ENCODE measurements at regions of chr20 and their contacts with region 1.

Region 1: DNA sequence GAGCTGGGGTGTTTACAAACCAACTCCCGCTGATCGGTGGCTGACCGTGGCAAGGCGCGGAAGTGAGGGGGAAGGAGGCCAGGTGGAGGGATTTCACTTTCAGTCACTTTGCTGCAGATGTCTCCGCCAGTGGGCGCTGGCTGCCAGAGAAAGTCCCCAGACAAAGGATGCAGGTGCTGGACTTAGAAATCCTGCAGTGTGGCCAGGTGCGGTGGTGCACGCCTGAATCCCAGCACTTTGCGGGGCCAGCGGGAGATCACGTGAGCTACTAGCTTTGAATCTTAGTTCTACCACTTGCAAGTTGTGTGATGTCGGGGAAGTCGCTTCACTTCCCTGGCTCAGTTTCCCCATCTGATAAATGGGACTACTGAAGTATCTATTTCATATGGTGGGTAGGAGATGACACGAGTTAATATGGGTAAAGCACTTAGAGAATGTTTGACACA is 180.4 kb downstream of the ZNF217 start:
- DNase-seq: peak; percentile 72
- ATAC-seq: peak; percentile 56
- H3K4me3 ChIP-seq: peak overlapping the region in 1 of 5 experiments; percentile 10
- H3K4me3 Mint-ChIP-seq: peak overlapping the region; percentile 56
- H3K27ac ChIP-seq: no peak overlapping the region
- H3K27ac Mint-ChIP-seq: peak overlapping the region; percentile 0
- H3K4me1 ChIP-seq: peaks cover 0 to 8% of the 10 kb centered on the region in 2 donors
- H3K4me1 Mint-ChIP-seq: peaks cover 5% of the 10 kb centered on the region
- H3K27me3 ChIP-seq: peaks cover 0 to 4% (median 0%) of the 10 kb centered on the region in 4 experiments
- H3K27me3 Mint-ChIP-seq: no peaks in the 10 kb centered on the region
- CTCF ChIP-seq: peak; percentile 62

Region 2: DNA sequence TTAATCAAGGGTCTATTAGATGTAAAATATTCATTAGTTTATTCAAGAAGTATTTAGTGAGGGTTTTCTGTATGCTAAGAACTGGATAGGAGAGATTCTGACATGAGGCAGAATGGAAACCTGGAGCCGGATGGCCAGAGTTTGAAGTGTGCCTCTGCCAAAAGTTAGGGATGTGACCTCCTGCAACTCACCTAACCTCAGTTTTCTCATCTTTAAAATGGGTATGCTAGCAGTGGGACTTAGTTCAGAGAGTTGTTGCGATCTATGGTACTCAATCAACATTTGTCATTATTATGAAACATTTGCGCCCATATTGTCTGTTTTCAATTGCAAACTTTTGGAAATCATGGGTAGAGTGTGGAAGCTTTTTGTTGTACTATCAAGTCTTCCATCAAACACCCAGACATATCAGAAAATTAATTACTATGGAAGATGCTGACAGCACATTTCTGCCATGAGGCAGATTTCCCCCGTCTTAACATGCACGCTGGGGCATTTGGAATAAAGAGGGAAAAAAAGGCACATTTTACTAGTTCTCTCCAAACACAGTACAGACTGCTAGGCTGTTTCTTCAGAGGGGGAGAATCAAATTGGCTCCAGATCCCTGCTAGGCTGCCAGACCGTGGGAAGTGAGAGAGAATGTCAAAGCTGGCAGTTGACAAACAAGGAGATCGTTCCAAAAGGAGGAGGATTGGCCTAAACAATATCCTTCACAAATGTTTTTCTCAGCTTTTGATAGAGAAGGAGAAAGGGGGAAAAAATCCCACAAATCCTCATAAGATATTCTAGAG is 646.4 kb before region 1 on chr20:
- CTCF ChIA-PET with region 1: no interaction called
- POLR2A ChIA-PET with region 1: no interaction called
- intact Hi-C with region 1: no loop called
- DNase-seq: no peak
- ATAC-seq: no peak
- H3K4me3 ChIP-seq: no peak overlapping the region
- H3K4me3 Mint-ChIP-seq: no peak overlapping the region
- H3K27ac ChIP-seq: no peak overlapping the region
- H3K27ac Mint-ChIP-seq: no peak overlapping the region
- H3K4me1 ChIP-seq: no peaks in the 10 kb centered on the region
- H3K4me1 Mint-ChIP-seq: no peaks in the 10 kb centered on the region
- H3K27me3 ChIP-seq: no peaks in the 10 kb centered on the region
- H3K27me3 Mint-ChIP-seq: no peaks in the 10 kb centered on the region
- CTCF ChIP-seq: no peak

Region 3: DNA sequence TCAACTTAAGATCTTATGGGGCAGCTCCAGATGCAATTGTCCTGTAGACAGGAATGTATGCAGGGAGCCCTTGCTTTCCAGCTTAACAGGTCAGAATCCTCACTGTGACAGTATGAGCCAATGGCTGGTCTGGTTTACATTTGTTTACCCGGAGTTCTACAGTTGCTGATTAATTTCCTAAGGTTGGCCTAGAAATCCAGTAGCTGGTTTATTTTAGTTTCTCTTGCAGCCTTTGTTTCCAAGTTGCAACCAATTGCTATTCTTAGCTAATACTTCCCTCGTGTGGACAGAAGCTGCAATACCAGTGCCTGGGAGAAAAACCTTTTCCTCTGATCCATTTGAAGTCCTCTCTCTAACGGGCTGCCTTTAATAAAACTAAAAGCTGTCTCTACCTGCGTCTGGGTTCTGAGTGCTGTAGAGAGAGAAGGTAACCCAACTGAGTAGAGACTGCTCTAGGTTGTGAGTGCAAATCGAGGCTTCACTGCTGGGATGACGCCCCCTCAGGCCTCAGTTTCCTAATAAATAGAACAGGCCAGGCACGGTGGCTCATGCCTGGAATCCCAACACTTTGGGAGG is 134.5 kb after region 1 on chr20:
- CTCF ChIA-PET with region 1: interaction called, 19 read pairs
- POLR2A ChIA-PET with region 1: no interaction called
- intact Hi-C with region 1: loop called (anchors 1 kb)
- DNase-seq: peak; percentile 45
- ATAC-seq: no peak
- H3K4me3 ChIP-seq: no peak overlapping the region
- H3K4me3 Mint-ChIP-seq: no peak overlapping the region
- H3K27ac ChIP-seq: no peak overlapping the region
- H3K27ac Mint-ChIP-seq: no peak overlapping the region
- H3K4me1 ChIP-seq: no peaks in the 10 kb centered on the region
- H3K4me1 Mint-ChIP-seq: no peaks in the 10 kb centered on the region
- H3K27me3 ChIP-seq: no peaks in the 10 kb centered on the region
- H3K27me3 Mint-ChIP-seq: no peaks in the 10 kb centered on the region
- CTCF ChIP-seq: peak; percentile 31